MCF 10A (cell line): ENCODE measurements at regions of chr17 and their contacts with region 1.

Region 1: GRCh38 chr17:63549946-63550807 is at the start of gene DCAF7:
- DNase-seq: peak; percentile 100
- H3K4me3 Mint-ChIP-seq: peak within 1 kb of the TSS; percentile 97
- H3K27ac Mint-ChIP-seq: peak within 1 kb of the TSS; percentile 92
- H3K4me1 Mint-ChIP-seq: peaks cover 16% of the 10 kb centered on the region
- H3K27me3 Mint-ChIP-seq: no peaks in the 10 kb centered on the region
- CTCF ChIP-seq: no peak
- total RNA-seq, gene DCAF7: 81.6 and 91.4 TPM in 2 replicates

Region 2: DNA sequence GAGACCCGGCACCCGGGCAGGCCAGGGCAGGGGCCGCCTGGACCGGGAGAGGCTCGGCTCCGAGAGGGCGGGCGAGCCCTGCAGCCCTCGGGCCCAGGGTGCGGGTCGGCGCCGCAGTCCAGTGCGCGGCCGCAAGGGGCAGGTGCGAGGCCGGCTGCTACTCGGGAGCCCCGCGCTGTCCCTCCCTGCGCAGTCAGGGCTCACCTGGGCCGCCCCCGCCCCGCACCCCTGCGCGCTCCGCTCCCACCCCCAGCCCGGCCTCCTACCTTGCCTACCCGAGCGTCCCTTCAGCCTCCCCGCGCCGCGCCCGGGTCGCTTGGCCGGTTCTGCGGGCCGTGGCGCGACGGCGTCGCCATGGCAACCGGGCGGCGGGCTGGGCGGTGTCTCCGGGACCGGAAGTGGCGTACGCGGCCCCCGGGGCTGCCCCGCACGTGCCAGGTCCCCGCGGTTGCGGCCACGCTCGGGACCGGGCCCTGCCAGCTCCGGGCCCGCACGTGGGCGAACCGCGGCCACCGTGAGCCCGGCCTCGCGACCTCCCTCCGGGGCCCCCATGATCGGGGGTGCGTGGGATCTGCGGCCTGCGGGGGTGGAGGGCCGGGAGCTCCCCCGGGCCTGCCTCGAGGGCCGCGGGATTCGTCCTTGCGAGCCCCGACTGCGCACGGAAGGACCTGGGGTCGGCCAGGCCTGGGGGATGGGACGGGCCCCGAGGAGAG is 104.0 kb before region 1 on chr17 and contains the start of gene CYB561:
- CTCF ChIA-PET with region 1: interaction called, 5 read pairs
- POLR2A ChIA-PET with region 1: interaction called, 29 read pairs
- intact Hi-C with region 1: loop called (anchors 2 kb)
- DNase-seq: peak; percentile 70
- H3K4me3 Mint-ChIP-seq: peak within 1 kb of the TSS; percentile 68
- H3K27ac Mint-ChIP-seq: peak within 1 kb of the TSS; percentile 90
- H3K4me1 Mint-ChIP-seq: peaks cover 16% of the 10 kb centered on the region
- H3K27me3 Mint-ChIP-seq: no peaks in the 10 kb centered on the region
- CTCF ChIP-seq: peak; percentile 64
- total RNA-seq, gene CYB561: 57.2 and 62.0 TPM in 2 replicates

Region 3: GRCh38 chr17:63459952-63460393 is 90.2 kb before region 1 on chr17:
- CTCF ChIA-PET with region 1: no interaction called
- POLR2A ChIA-PET with region 1: interaction called, 14 read pairs
- intact Hi-C with region 1: no loop called
- DNase-seq: no peak
- H3K4me3 Mint-ChIP-seq: no peak overlapping the region
- H3K27ac Mint-ChIP-seq: no peak overlapping the region
- H3K4me1 Mint-ChIP-seq: peaks cover 26% of the 10 kb centered on the region
- H3K27me3 Mint-ChIP-seq: no peaks in the 10 kb centered on the region
- CTCF ChIP-seq: no peak

Region 4: DNA sequence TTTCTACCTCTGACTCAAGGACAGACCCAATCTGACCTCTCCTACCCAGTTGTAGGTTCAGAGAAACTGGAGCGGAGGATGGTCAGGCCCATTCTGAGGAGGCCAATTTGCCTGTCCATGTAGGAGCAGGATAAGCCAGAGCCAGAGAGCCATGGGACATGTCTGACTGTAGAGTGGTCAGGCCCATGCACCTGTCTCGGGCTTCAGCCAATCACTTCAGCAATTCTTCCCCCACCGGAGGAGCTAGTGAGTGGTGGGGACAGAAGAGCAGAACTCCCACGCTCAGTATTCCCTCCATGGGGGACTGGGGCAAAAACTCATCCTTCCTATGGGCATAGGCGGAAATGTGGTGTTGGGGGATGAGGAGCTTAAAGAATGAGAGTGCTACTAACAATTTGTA is 14.4 kb after region 1 on chr17:
- CTCF ChIA-PET with region 1: interaction called, 3 read pairs
- POLR2A ChIA-PET with region 1: interaction called, 29 read pairs
- intact Hi-C with region 1: no loop called
- DNase-seq: no peak
- H3K4me3 Mint-ChIP-seq: no peak overlapping the region
- H3K27ac Mint-ChIP-seq: no peak overlapping the region
- H3K4me1 Mint-ChIP-seq: peaks cover 6% of the 10 kb centered on the region
- H3K27me3 Mint-ChIP-seq: no peaks in the 10 kb centered on the region
- CTCF ChIP-seq: no peak

Region 5: DNA sequence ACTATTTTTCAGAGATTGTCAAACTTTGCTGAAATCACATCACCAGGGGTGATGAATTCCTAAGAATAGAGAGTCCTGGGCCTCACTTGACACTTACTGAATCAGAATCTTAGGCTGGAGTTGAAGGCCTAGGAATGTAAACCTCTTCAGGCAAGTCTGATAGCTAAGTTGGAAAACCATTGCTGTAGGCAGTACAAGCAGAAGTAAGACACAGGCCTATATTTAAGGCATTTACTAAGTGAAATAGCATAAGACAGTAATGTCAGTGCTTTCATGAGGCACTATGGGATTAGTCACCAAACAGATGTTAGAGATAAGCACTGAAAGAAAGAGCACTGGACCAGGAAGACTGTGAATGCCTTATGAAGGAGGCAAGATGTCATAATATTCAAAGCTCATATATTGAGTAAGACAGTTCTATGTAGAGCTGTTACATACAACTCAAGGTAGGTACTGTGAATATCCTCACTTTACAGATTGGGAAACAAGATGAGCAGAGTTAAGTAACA is 21.6 kb after region 1 on chr17:
- CTCF ChIA-PET with region 1: interaction called, 7 read pairs
- POLR2A ChIA-PET with region 1: interaction called, 33 read pairs
- intact Hi-C with region 1: no loop called
- DNase-seq: peak; percentile 41
- H3K4me3 Mint-ChIP-seq: no peak overlapping the region
- H3K27ac Mint-ChIP-seq: no peak overlapping the region
- H3K4me1 Mint-ChIP-seq: peaks cover 13% of the 10 kb centered on the region
- H3K27me3 Mint-ChIP-seq: no peaks in the 10 kb centered on the region
- CTCF ChIP-seq: no peak

Region 6: DNA sequence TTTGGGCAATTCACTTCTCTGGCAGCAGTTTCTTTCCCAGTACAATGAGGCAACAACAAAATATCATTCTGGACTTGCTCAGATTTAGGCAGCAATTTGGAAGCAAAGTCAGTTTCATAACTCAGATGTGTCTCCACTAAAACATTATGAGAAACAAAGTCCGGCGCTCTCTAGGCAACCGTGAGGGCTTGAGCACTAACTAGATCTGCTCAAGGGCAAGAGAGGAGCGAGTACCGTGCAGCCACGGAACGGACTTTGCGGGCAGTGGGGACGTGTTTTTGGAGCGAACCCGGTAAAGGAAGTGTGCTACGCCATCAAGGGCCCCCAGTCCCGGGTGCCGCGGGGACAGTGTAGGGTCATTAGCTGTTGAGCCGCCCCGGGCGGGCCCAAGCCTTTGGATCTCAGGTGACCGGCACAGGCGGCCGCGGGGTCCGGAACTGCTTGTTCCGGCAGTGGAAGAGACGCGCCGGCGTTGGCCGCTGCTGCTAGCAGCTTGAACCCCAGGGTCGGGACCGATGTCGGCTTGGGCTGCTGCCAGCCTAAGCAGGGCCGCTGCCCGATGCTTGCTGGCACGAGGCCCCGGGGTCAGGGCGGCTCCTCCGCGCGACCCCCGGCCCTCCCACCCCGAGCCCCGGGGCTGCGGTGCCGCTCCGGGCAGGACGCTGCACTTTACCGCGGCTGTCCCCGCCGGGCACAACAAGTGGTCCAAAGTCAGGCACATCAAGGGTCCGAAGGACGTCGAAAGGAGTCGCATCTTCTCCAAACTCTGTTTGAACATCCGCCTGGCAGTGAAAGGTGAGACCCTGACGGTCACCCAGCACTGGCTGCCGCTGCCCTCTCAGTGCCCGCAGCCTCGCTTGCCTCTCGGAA is 50.6 kb after region 1 on chr17 and contains the start of gene TACO1:
- CTCF ChIA-PET with region 1: no interaction called
- POLR2A ChIA-PET with region 1: interaction called, 38 read pairs
- intact Hi-C with region 1: no loop called
- DNase-seq: peak; percentile 76
- H3K4me3 Mint-ChIP-seq: peak within 1 kb of the TSS; percentile 79
- H3K27ac Mint-ChIP-seq: peak within 1 kb of the TSS; percentile 88
- H3K4me1 Mint-ChIP-seq: peaks cover 4% of the 10 kb centered on the region
- H3K27me3 Mint-ChIP-seq: no peaks in the 10 kb centered on the region
- CTCF ChIP-seq: no peak
- total RNA-seq, gene TACO1: 36.5 and 38.7 TPM in 2 replicates

Region 7: DNA sequence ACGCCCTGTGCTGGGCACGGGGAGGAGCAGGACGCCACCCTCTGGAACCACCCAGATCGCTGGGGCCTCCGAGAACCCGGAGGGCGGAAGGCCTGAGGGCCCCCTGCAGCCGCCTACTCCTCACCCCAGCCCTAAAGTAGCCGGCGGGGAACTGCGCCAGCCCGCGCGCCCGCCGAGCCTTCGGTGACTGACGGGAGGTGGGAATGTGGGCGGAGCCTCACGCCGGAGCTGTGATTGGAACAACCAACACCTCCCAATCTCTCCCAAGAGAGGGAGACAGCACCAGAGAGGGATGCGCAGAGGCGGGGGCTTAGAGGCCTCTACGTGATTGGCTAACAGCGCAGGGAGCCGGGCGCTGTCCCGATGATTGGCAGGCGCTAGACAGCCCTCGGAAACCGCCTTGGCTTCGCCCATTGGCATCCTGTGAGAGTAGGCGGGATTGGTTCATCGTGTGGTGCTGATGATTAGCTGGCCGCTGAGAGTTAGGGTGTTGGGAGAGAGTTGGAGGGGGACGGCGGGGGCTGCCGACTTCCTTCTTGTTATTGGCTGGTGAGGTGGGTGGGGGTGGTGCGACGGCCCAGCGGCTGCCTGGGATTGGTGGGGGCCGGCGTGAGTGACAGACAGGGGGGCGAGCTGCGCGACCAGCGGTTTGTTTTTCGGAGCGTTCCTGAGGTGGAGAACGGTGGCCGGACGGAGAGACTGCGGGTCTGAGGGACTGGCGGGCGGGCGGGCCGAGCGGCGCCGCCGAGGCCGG is 71.8 kb after region 1 on chr17 and contains the start of gene MAP3K3:
- CTCF ChIA-PET with region 1: no interaction called
- POLR2A ChIA-PET with region 1: interaction called, 13 read pairs
- intact Hi-C with region 1: no loop called
- DNase-seq: peak; percentile 100
- H3K4me3 Mint-ChIP-seq: peak within 1 kb of the TSS; percentile 93
- H3K27ac Mint-ChIP-seq: no peak within 1 kb of the TSS
- H3K4me1 Mint-ChIP-seq: peaks cover 20% of the 10 kb centered on the region
- H3K27me3 Mint-ChIP-seq: no peaks in the 10 kb centered on the region
- CTCF ChIP-seq: no peak
- total RNA-seq, gene MAP3K3: 12.8 and 13.8 TPM in 2 replicates

Region 8: DNA sequence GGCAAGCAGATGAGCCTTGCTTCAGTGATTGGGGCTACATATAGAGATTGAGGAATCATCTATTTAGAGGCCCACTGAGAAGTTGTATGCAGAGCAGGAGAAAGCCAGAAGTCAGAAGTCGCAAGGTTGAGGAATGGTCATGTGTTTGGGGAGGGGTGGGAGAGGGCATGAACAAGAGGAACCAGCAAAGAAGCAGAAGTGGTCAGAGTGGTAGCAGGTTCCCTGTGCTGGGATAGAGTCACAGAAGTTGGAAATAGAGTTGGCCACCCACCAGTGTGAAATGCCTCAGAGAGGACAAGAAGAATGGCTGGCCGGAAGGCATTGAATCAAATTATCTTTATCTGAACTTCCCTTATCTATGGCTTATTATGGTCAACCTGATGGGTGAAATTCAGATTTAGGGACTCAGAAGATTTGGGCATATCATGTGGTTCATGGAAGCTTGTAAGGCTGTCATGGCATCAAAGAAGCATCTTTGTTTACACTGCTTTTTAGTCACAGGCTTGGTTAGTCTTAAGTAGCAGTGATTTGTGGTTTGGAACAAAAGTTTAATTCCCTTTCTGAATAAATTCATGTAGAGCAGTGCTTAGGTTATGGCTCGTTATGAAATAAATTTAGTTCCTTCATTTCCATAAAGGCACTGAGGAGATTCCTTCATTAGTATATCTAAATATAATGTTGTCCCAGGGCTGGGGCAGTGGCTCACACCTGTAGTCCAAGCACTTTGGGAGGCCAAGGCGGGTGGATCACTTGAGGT is 91.7 kb after region 1 on chr17:
- CTCF ChIA-PET with region 1: no interaction called
- POLR2A ChIA-PET with region 1: no interaction called
- intact Hi-C with region 1: no loop called
- DNase-seq: no peak
- H3K4me3 Mint-ChIP-seq: no peak overlapping the region
- H3K27ac Mint-ChIP-seq: no peak overlapping the region
- H3K4me1 Mint-ChIP-seq: peaks cover 16% of the 10 kb centered on the region
- H3K27me3 Mint-ChIP-seq: no peaks in the 10 kb centered on the region
- CTCF ChIP-seq: no peak